Activated T-helper 2 cell treated with anti-CD3 and anti-CD28 coated beads, Interferon-gamma antibody, Interleukin-2, Interleukin-4, amounts not matched to agents 10 μg/mL and 5 μg/mL and 100 μg/mL, durations not matched to agents 14 hours and 24 hours and 36 hours (primary cell): ENCODE measurements at regions of chr18 and their contacts with region 1.

Region 1: GRCh38 chr18:46073474-46074331 is 1.6 kb upstream of the PSTPIP2 start:
- DNase-seq: peak; percentile 38
- H3K4me3 Mint-ChIP-seq: no peak overlapping the region
- H3K27ac Mint-ChIP-seq: peak overlapping the region; percentile 20
- H3K4me1 Mint-ChIP-seq: peaks cover 39% of the 10 kb centered on the region
- H3K27me3 Mint-ChIP-seq: no peaks in the 10 kb centered on the region

Region 2: GRCh38 chr18:45621061-45621511 is 452.6 kb before region 1 on chr18:
- intact Hi-C with region 1: loop called (anchors 1 kb)
- DNase-seq: no peak
- H3K4me3 Mint-ChIP-seq: no peak overlapping the region
- H3K27ac Mint-ChIP-seq: no peak overlapping the region
- H3K4me1 Mint-ChIP-seq: no peaks in the 10 kb centered on the region
- H3K27me3 Mint-ChIP-seq: peaks cover 17% of the 10 kb centered on the region

Region 3: DNA sequence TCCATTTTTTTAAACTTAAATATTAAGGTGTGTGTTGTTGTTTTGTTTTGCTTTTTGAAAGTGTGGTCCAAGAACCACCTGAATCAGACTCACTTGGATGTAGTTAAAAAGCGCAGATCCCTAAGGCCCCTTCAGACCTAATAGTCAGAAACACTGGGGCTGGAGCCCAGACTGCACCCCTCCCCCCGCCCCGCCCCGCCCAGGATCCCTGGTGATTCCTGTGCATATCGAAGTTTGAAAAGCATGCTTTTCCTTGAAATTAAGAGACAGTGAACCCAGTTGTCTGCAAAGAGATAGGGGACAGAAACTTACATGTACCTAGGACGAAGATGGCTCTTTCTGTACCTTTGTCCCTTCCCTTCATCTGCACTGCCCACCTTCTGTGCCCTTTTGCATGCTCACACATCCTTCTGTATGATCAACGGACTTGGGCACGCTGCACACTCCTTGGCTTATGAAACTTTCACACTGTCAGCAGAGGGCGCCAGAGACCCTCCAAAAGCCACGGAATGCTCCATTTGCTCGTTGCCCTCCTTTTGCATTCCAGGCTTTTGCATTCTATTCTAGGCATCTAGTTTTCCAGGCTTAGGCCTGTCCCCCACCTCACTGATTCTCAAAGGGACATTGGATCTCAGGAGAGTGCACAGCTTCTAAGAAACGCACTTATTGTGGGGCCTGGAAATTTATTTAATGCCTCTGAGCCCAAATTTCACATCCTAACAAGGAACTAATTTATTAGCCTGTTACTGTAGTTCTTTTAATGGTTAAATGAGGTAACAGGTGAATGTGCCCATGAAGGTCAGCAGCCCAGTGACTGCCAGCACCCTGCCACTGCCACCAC is 382.5 kb before region 1 on chr18:
- intact Hi-C with region 1: loop called (anchors 5 kb)
- DNase-seq: peak; percentile 60
- H3K4me3 Mint-ChIP-seq: no peak overlapping the region
- H3K27ac Mint-ChIP-seq: no peak overlapping the region
- H3K4me1 Mint-ChIP-seq: peaks cover 38% of the 10 kb centered on the region
- H3K27me3 Mint-ChIP-seq: peaks cover 25% of the 10 kb centered on the region

Region 4: DNA sequence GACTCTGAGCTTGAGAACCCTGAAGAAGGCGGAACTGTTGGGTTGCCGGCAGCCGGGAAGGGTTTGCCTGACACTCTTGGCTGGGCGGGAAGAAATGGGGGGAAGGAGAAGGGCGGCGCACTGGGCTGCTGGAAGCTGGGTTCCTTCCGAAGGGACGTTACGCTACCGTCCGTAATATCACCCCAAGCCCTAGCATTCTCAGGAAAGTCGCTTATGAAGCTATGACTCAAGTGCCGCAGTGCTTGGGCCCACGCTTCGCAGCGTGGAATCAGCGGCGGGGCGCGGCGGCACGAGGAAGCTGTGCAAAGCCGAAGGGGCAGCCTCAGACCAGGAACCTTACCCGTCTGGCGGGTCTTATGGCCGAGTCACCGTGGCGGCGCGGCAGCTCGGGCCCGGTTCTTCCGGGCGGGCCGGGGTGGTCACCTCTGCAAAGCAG is 298.4 kb before region 1 on chr18:
- intact Hi-C with region 1: no loop called
- DNase-seq: peak; percentile 18
- H3K4me3 Mint-ChIP-seq: peak overlapping the region; percentile 65
- H3K27ac Mint-ChIP-seq: no peak overlapping the region
- H3K4me1 Mint-ChIP-seq: peaks cover 19% of the 10 kb centered on the region
- H3K27me3 Mint-ChIP-seq: peaks cover 61% of the 10 kb centered on the region

Region 5: GRCh38 chr18:45920367-45920766 is 153.3 kb before region 1 on chr18:
- intact Hi-C with region 1: loop called (anchors 2 kb)
- DNase-seq: no peak
- H3K4me3 Mint-ChIP-seq: no peak overlapping the region
- H3K27ac Mint-ChIP-seq: no peak overlapping the region
- H3K4me1 Mint-ChIP-seq: peaks cover 1% of the 10 kb centered on the region
- H3K27me3 Mint-ChIP-seq: no peaks in the 10 kb centered on the region

Region 6: DNA sequence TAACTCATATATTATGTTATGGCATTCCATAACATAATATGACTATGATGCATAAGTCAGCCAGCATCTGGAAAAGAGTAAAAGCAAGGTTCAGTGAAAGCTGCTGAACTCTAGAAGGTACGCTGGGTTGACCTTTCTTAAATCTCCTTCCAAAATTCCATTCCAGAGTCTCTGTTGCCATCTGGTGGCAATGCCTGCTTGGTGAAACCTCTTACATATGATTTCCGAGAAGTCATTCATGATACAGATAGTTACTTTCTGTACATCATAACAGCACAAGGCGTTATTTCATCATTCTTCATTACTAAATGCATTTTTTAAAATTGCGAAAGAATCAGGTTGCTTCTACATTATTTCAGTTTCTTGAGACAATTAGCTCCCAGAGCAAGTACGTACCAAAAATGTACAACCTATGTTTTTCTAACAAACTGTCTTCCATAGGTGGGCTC is 99.6 kb before region 1 on chr18:
- intact Hi-C with region 1: loop called (anchors 1 kb)
- DNase-seq: peak; percentile 55
- H3K4me3 Mint-ChIP-seq: no peak overlapping the region
- H3K27ac Mint-ChIP-seq: peak overlapping the region; percentile 38
- H3K4me1 Mint-ChIP-seq: peaks cover 23% of the 10 kb centered on the region
- H3K27me3 Mint-ChIP-seq: no peaks in the 10 kb centered on the region

Region 7: DNA sequence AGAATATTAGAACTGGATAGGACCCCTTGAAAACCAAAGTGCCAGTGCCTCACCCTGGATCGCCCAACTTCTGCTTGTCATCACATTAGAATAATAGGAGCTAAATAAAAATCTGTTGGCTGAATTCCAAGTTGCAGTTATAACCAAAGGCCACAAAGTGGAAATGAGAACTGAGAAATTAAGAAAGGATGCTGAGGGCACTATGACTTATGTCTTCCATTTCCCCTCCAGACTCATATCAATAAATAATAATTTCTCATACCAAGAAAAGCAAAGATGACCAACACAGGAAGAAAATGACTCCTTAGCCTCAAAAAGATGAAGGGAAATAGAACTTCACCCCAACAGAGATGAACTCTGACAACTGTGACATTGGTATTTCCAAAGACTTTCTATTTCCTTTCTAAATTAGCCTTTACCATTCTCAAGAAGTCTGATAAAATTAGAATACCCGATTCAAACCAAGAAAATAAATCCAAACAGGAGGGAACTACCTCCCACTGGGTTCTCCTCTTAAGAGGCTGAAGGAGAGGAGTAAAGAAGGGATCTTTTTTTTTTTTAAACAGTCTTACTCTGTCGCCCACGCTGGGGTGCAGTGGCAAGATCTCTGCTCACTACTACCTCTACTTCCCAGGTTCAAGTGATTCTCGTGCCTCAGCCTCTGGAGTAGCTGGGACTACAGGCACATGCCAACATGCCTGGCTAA is 60.1 kb before region 1 on chr18:
- intact Hi-C with region 1: loop called (anchors 2 kb)
- DNase-seq: no peak
- H3K4me3 Mint-ChIP-seq: no peak overlapping the region
- H3K27ac Mint-ChIP-seq: peak overlapping the region; percentile 53
- H3K4me1 Mint-ChIP-seq: peaks cover 18% of the 10 kb centered on the region
- H3K27me3 Mint-ChIP-seq: no peaks in the 10 kb centered on the region

Region 8: GRCh38 chr18:46051731-46052461 is 21.8 kb before region 1 on chr18:
- intact Hi-C with region 1: loop called (anchors 1 kb)
- DNase-seq: no peak
- H3K4me3 Mint-ChIP-seq: no peak overlapping the region
- H3K27ac Mint-ChIP-seq: no peak overlapping the region
- H3K4me1 Mint-ChIP-seq: peaks cover 50% of the 10 kb centered on the region
- H3K27me3 Mint-ChIP-seq: no peaks in the 10 kb centered on the region

Region 9: DNA sequence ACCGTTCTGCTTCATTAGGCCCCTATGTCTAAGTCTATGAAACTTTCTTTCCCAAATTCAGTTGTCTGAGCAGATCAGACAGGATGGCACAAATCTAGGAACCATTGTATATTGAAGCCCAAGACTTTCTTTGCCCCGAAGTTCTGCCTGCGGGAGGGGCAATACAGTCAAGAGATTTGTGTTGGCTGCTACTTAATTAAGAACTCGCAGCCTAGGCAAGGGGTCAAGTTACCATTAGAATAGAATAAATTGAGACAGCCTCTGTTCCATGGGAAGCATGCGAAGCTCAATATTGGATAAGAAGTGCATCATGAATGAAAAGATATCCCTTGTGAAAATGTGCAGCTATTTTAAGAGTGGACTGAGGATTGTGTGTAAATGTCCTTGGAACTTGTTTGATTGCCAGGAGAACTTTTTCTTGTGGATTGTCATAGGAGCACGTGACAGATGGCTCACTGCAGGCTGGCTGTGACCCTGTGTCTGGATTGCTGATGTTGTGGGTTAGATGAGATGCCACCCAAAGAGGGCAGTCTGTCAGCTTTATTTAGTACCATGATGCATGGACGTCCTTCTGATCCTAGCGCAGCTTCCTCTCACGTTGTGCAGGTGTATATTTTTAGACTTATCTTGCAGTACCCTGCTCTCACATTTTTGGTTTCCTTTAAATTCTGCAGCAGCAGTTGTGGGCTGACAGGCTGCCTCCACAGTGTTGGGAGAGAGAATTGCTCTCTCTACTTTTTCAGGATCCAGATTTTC is 61.4 kb after region 1 on chr18:
- intact Hi-C with region 1: no loop called
- DNase-seq: no peak
- H3K4me3 Mint-ChIP-seq: no peak overlapping the region
- H3K27ac Mint-ChIP-seq: no peak overlapping the region
- H3K4me1 Mint-ChIP-seq: peaks cover 2% of the 10 kb centered on the region
- H3K27me3 Mint-ChIP-seq: no peaks in the 10 kb centered on the region

Region 10: DNA sequence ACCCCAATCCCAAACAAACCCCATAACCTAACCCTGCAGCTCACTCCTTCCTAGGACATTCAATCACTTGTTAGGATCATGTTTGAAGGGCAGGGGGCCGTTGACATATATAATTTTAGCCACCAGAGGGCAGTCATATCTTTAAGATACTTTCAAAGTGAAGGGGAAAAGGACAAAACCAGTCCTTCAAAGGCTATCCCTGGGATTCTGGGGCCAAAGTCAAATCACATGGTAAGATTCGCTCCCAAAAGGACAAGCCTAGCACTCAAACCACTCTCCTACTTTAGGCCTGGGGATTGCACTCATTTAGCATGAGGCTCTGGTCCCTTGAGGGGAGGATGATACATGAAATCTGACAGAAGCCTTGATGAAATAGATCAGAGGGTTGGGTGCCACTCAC is 75.1 kb after region 1 on chr18:
- intact Hi-C with region 1: no loop called
- DNase-seq: peak; percentile 33
- H3K4me3 Mint-ChIP-seq: no peak overlapping the region
- H3K27ac Mint-ChIP-seq: no peak overlapping the region
- H3K4me1 Mint-ChIP-seq: peaks cover 24% of the 10 kb centered on the region
- H3K27me3 Mint-ChIP-seq: no peaks in the 10 kb centered on the region